ENCODE measurements at regions of chr13 and their contacts with region 1.

Region 1: DNA sequence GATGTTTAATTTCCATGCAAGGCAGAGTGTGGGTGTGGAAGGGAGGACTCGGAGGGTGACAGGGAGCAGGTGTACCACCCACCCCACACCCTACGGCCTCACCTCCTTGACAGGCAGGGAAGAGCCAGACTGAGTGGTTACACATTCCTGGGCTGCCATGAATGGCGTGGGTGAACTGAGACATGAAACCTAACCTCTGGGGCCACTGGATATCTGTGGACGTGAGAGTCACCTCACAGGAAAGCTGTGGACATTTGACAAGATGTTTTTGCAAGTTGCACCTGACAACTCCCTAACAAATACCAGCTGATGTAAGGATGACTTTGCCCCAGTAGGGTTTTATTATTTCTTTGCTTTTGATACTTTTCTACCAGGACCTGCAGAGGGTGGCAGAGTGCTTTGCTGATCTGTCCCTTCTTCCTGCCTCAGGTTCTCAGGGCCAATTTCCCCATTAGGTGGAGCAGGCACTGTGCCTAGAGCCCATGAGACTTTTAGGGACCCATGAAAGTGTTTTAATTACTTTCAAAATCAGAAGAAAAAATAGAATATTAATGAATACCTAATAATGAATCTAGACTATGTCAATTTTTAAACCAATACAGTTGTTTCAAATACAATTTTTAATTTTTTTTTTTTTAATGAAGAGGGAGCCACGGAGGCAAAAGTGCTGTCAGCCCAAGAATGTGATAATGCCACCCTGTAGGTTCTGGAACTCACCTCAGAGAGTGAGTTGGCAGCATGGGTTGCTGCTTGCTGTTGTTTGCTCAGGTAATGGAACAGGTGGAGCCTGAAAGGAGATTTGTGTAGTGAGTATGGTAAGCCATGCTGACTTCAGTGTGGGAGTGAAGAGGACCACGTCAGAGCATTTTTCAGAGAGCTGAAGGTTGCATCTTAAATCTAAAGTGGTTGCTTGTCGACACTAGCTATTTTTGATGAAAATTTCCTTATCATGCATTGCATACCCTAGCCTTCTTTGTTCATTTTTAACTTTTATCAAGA is 58.0 kb upstream of the CYSLTR2 start:
- DNase-seq: peak; percentile 68
- H3K4me3 ChIP-seq: no peak overlapping the region
- H3K27ac ChIP-seq: no peak overlapping the region
- H3K4me1 ChIP-seq: no peaks in the 10 kb centered on the region
- CTCF ChIP-seq: peak; percentile 85

Region 2: GRCh38 chr13:48291730-48292129 is 304.0 kb before region 1 on chr13:
- CTCF ChIA-PET with region 1: no interaction called
- POLR2A ChIA-PET with region 1: no interaction called
- intact Hi-C with region 1: no loop called
- DNase-seq: no peak
- H3K4me3 ChIP-seq: no peak overlapping the region
- H3K27ac ChIP-seq: no peak overlapping the region
- H3K4me1 ChIP-seq: peaks cover 17% of the 10 kb centered on the region
- CTCF ChIP-seq: no peak

Region 3: GRCh38 chr13:48612896-48613295 is 17.2 kb after region 1 on chr13:
- CTCF ChIA-PET with region 1: no interaction called
- POLR2A ChIA-PET with region 1: no interaction called
- intact Hi-C with region 1: no loop called
- DNase-seq: no peak
- H3K4me3 ChIP-seq: no peak overlapping the region
- H3K27ac ChIP-seq: no peak overlapping the region
- H3K4me1 ChIP-seq: no peaks in the 10 kb centered on the region
- CTCF ChIP-seq: no peak

Region 4: DNA sequence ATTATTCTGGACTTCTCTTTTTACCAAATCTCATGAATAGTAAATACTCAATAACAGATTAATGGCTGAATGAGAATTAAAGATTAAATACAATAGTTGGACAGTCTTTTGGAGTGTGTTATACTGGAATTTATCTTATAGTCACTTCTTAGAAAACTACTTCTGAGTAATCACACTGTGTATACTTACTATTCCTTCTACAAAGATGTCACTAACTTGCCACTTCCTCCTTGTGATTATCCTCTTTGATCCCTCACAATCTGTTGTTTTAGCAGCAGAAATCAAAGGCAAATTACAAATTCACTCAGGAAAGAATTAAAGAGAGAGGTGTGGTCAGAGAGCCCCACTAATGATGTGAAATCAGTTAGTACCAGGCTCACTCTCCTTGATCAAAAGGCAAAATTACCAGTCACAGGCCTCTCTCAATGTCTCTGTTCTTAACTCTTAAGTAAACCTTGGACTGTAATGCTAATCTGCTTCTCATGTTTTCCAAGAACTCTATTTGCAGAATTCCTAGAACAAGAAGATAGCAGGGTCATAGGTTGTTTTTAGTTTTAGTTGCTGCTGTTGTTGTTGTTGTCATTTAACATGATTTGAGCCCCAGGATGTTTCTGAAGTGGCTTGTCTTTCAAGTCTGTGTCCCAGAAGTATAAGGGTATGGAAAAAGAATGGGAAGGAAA is 342.7 kb after region 1 on chr13:
- CTCF ChIA-PET with region 1: no interaction called
- POLR2A ChIA-PET with region 1: interaction called, 3 read pairs
- intact Hi-C with region 1: loop called (anchors 10 kb)
- DNase-seq: no peak
- H3K4me3 ChIP-seq: no peak overlapping the region
- H3K27ac ChIP-seq: no peak overlapping the region
- H3K4me1 ChIP-seq: no peaks in the 10 kb centered on the region
- CTCF ChIP-seq: no peak

Measured in OCI-LY7 (cell line).